Mammary epithelial cell (primary cell): ENCODE measurements at regions of chr4 and their contacts with region 1.

Region 1: GRCh38 chr4:88514557-88515511 is 8.7 kb downstream of the PYURF start:
- DNase-seq: no peak
- H3K4me3 ChIP-seq: no peak overlapping the region
- H3K27ac ChIP-seq: no peak overlapping the region
- H3K4me1 ChIP-seq: no peaks in the 10 kb centered on the region
- H3K27me3 ChIP-seq: no peaks in the 10 kb centered on the region
- CTCF ChIP-seq: no peak

Region 2: DNA sequence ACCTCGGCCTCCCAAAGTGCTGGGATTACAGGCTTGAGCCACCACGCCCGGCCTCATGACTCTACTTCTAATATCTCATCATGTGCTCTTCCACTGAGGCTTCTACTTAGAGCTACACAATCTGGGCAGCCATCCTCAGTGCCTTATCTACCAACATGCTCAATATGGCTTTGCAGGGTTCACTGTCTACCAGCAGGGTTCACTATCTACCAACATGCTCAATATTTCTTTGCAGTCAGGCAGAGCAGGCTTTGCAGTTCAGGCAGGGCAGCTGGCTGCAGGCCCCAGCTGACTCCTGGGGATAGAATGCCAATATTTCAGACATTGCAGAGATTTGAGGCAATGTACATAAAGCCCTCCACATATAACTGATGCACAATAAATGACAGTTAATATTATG is 459.9 kb before region 1 on chr4:
- CTCF ChIA-PET with region 1: no interaction called
- dilution Hi-C with region 1: loop called (anchors 5 kb)
- in situ Hi-C with region 1: loop called in 1 of 2 experiments (anchors 10 kb)
- intact Hi-C with region 1: loop called (anchors 2 kb)
- DNase-seq: peak; percentile 39
- H3K4me3 ChIP-seq: no peak overlapping the region
- H3K27ac ChIP-seq: no peak overlapping the region
- H3K4me1 ChIP-seq: no peaks in the 10 kb centered on the region
- H3K27me3 ChIP-seq: no peaks in the 10 kb centered on the region
- CTCF ChIP-seq: peak; percentile 40 to 63

Region 3: DNA sequence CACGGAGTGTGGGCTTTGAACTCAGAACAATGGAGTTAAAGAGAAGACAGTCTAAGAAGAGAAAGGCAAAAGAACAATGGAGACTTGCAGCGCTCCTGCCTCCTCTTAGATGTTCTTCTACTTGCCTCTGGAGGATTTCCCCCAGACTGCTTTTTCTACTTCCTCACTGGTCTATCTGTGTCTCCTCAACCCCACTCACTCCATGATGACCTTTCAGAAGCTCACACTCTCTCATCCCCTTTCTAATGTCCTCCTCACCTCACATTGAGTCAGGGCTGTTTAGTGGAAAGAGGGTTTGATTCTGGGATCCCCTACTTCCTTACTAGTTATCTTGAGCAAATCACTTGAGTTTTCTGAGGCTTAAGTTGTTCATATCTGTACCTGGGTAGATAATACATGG is 148.4 kb before region 1 on chr4:
- CTCF ChIA-PET with region 1: interaction called, 8 read pairs
- dilution Hi-C with region 1: no loop called
- in situ Hi-C with region 1: loop called (anchors 5 kb)
- intact Hi-C with region 1: loop called (anchors 1 kb)
- DNase-seq: no peak
- H3K4me3 ChIP-seq: no peak overlapping the region
- H3K27ac ChIP-seq: no peak overlapping the region
- H3K4me1 ChIP-seq: no peaks in the 10 kb centered on the region
- H3K27me3 ChIP-seq: no peaks in the 10 kb centered on the region
- CTCF ChIP-seq: no peak

Region 4: GRCh38 chr4:88378691-88379559 is 135.9 kb before region 1 on chr4 and contains the start of gene HERC6:
- CTCF ChIA-PET with region 1: interaction called, 17 read pairs
- dilution Hi-C with region 1: no loop called
- in situ Hi-C with region 1: no loop called
- intact Hi-C with region 1: no loop called
- DNase-seq: peak; percentile 89
- H3K4me3 ChIP-seq: peak within 1 kb of the TSS; percentile 91 to 95 (median 94)
- H3K27ac ChIP-seq: peak within 1 kb of the TSS; percentile 69
- H3K4me1 ChIP-seq: peaks cover 3% of the 10 kb centered on the region
- H3K27me3 ChIP-seq: no peaks in the 10 kb centered on the region
- CTCF ChIP-seq: peak; percentile 45 to 80
- total RNA-seq, gene HERC6: 7.6 to 10.2 TPM

Region 5: DNA sequence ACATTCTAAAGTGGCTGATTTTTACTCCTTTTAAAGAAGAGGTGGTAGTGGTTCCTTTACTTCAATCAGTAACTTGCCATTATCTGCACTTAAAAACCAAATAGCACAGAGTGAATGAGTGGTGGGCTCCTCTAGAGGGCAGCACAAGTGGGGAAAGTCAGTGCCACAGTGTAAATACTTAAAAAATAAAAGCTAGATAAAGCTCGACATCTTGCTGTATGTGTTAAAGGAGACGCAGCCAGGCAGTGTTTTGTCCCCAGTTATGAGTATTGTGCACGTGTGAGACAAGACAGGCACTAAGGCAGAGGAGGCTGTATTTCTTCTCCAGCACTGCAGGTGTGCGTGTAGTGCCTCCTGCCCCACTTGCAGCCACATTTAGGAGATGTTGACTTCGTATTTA is 158.2 kb after region 1 on chr4:
- CTCF ChIA-PET with region 1: no interaction called
- dilution Hi-C with region 1: no loop called
- in situ Hi-C with region 1: no loop called
- intact Hi-C with region 1: no loop called
- DNase-seq: peak; percentile 10
- H3K4me3 ChIP-seq: no peak overlapping the region
- H3K27ac ChIP-seq: no peak overlapping the region
- H3K4me1 ChIP-seq: no peaks in the 10 kb centered on the region
- H3K27me3 ChIP-seq: no peaks in the 10 kb centered on the region
- CTCF ChIP-seq: peak; percentile 49 to 50